CD8-positive, alpha-beta T cell (primary cell): ENCODE measurements at regions of chr10 and their contacts with region 1.

Region 1: DNA sequence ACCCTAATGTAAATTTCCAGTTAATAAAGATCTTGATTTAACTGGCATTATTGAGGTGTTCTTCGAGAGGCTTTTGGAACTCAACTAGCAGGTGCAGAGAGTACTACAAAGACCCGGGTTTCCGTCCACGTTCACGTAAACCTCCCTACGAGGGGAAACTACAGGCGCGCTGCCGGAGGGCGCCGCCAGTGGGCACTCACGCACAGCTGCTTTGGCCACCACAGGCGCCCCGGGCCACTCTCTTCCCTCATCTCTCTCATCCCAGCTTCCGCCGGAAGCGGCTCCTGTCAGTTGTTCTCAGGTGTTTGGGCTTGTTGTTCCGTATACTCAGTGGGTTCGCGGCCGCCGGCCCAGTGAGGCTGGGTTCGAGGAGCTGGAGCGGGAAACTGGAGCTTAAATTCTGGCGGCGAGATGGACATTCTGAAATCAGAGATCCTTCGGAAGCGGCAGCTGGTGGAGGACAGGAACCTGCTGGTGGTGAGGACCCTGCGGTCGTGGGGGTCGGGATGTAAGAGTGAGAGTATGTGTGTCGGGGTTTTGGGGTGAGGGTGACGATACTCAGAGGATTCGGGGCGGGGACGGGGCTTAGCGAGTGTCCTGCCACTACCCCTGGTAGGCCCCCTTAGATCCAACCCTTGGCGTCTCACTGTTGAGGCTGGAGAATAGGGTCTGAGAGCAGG is at the start of gene PRPF18:
- DNase-seq: peak; percentile 92 to 97 (median 95)
- ATAC-seq: peak; percentile 99
- H3K4me3 ChIP-seq: peak within 1 kb of the TSS; percentile 97
- H3K4me3 Mint-ChIP-seq: peak within 1 kb of the TSS; percentile 100
- H3K27ac ChIP-seq: peak within 1 kb of the TSS; percentile 69 to 73
- H3K27ac Mint-ChIP-seq: peak within 1 kb of the TSS; percentile 99
- H3K4me1 ChIP-seq: peaks cover 16% of the 10 kb centered on the region
- H3K4me1 Mint-ChIP-seq: peaks cover 41% of the 10 kb centered on the region
- H3K27me3 ChIP-seq: peaks cover 3 to 4% of the 10 kb centered on the region in 2 experiments
- H3K27me3 Mint-ChIP-seq: peaks cover 18% of the 10 kb centered on the region
- CTCF ChIP-seq: peak; percentile 96
- total RNA-seq, gene PRPF18: 29.4 to 29.6 TPM

Region 2: GRCh38 chr10:13099666-13100348 is 487.0 kb before region 1 on chr10 and contains the start of gene OPTN:
- CTCF ChIA-PET with region 1: no interaction called
- POLR2A ChIA-PET with region 1: no interaction called
- intact Hi-C with region 1: loop called (anchors 2 to 5 kb)
- DNase-seq: peak; percentile 62 to 93 (median 79)
- ATAC-seq: peak; percentile 75
- H3K4me3 ChIP-seq: peak within 1 kb of the TSS; percentile 62 to 89
- H3K4me3 Mint-ChIP-seq: peak within 1 kb of the TSS; percentile 92
- H3K27ac ChIP-seq: peak within 1 kb of the TSS; percentile 69 to 94
- H3K27ac Mint-ChIP-seq: peak within 1 kb of the TSS; percentile 98
- H3K4me1 ChIP-seq: peaks cover 6% of the 10 kb centered on the region
- H3K4me1 Mint-ChIP-seq: peaks cover 46% of the 10 kb centered on the region
- H3K27me3 ChIP-seq: no peaks in the 10 kb centered on the region
- H3K27me3 Mint-ChIP-seq: no peaks in the 10 kb centered on the region
- CTCF ChIP-seq: peak; percentile 57
- total RNA-seq, gene OPTN: 66.3 to 71.6 TPM

Region 3: GRCh38 chr10:13299437-13300287 is 287.2 kb before region 1 on chr10 and contains the start of gene PHYH:
- CTCF ChIA-PET with region 1: no interaction called
- POLR2A ChIA-PET with region 1: interaction called, 3 read pairs
- intact Hi-C with region 1: loop called in 1 of 2 experiments (anchors 10 kb)
- DNase-seq: peak; percentile 65 to 93 (median 80)
- ATAC-seq: peak; percentile 52
- H3K4me3 ChIP-seq: peak within 1 kb of the TSS; percentile 68 to 70
- H3K4me3 Mint-ChIP-seq: peak within 1 kb of the TSS; percentile 84
- H3K27ac ChIP-seq: peak within 1 kb of the TSS; percentile 81 to 91
- H3K27ac Mint-ChIP-seq: peak within 1 kb of the TSS; percentile 94
- H3K4me1 ChIP-seq: peaks cover 28% of the 10 kb centered on the region
- H3K4me1 Mint-ChIP-seq: peaks cover 26% of the 10 kb centered on the region
- H3K27me3 ChIP-seq: no peaks in the 10 kb centered on the region
- H3K27me3 Mint-ChIP-seq: no peaks in the 10 kb centered on the region
- CTCF ChIP-seq: no peak
- total RNA-seq, gene PHYH: 12.6 TPM

Region 4: GRCh38 chr10:13371897-13372470 is 214.8 kb before region 1 on chr10:
- CTCF ChIA-PET with region 1: interaction called, 3 read pairs
- POLR2A ChIA-PET with region 1: no interaction called
- intact Hi-C with region 1: loop called (anchors 1 kb)
- DNase-seq: peak; percentile 6 to 85 (median 65)
- ATAC-seq: peak; percentile 100
- H3K4me3 ChIP-seq: no peak overlapping the region
- H3K4me3 Mint-ChIP-seq: no peak overlapping the region
- H3K27ac ChIP-seq: no peak overlapping the region
- H3K27ac Mint-ChIP-seq: no peak overlapping the region
- H3K4me1 ChIP-seq: no peaks in the 10 kb centered on the region
- H3K4me1 Mint-ChIP-seq: peaks cover 4% of the 10 kb centered on the region
- H3K27me3 ChIP-seq: no peaks in the 10 kb centered on the region
- H3K27me3 Mint-ChIP-seq: peaks cover 7% of the 10 kb centered on the region
- CTCF ChIP-seq: peak; percentile 93

Region 5: DNA sequence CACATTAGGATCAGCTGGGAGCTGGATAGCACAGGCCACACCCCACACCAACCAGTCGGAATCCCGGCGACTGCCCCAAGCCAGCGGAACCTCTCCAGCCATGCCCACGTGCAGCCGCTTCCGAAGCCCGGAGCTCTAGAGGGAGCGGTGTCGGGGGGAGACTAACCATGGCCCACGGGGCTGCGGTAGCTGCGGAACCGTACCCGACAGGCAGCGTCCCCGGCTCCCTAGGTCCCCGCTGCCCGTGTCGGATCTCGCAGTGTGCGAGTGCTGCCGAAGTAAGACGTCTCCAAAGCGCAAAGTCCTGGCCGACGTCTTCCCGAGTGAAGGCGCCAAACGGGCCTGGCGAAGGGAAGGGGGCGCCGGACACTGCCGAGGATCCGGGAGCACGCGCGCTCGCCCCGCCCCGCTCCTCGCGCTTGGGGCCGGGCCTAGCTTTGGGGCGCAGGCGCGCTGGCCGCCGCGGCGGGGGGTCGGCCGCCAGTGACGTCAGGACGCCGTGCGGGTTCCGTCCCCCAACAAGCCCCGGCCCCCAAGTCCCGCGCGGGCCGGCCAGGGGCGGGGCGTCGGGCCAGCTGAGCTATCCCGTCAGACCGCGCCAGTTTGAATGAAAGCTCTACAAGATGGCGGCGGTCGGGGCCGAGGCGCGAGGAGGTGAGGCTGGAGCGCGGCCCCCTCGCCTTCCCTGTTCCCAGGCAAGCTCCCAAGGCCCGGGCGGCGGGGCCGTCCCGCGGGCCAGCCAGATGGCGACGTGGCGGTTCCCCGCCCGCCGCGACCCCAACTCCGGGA is 1291.6 kb after region 1 on chr10 and contains the start of gene SUV39H2:
- CTCF ChIA-PET with region 1: no interaction called
- POLR2A ChIA-PET with region 1: interaction called, 4 read pairs
- intact Hi-C with region 1: loop called in 1 of 2 experiments (anchors 10 kb)
- DNase-seq: peak; percentile 78 to 96 (median 92)
- ATAC-seq: peak; percentile 80
- H3K4me3 ChIP-seq: peak within 1 kb of the TSS; percentile 92 to 94
- H3K4me3 Mint-ChIP-seq: peak within 1 kb of the TSS; percentile 96
- H3K27ac ChIP-seq: peak within 1 kb of the TSS; percentile 67 to 69
- H3K27ac Mint-ChIP-seq: peak within 1 kb of the TSS; percentile 79
- H3K4me1 ChIP-seq: peaks cover 26% of the 10 kb centered on the region
- H3K4me1 Mint-ChIP-seq: peaks cover 31% of the 10 kb centered on the region
- H3K27me3 ChIP-seq: no peaks in the 10 kb centered on the region
- H3K27me3 Mint-ChIP-seq: no peaks in the 10 kb centered on the region
- CTCF ChIP-seq: no peak
- total RNA-seq, gene SUV39H2: 2.6 to 3.1 TPM

Region 6: GRCh38 chr10:15097011-15097812 is 1510.4 kb after region 1 on chr10 and contains the start of gene RPP38:
- CTCF ChIA-PET with region 1: no interaction called
- POLR2A ChIA-PET with region 1: no interaction called
- intact Hi-C with region 1: loop called in 1 of 2 experiments (anchors 5 kb)
- DNase-seq: peak; percentile 85 to 98 (median 95)
- ATAC-seq: peak; percentile 83
- H3K4me3 ChIP-seq: peak within 1 kb of the TSS; percentile 74 to 88
- H3K4me3 Mint-ChIP-seq: peak within 1 kb of the TSS; percentile 97
- H3K27ac ChIP-seq: peak within 1 kb of the TSS; percentile 92 to 96
- H3K27ac Mint-ChIP-seq: peak within 1 kb of the TSS; percentile 97
- H3K4me1 ChIP-seq: peaks cover 28% of the 10 kb centered on the region
- H3K4me1 Mint-ChIP-seq: peaks cover 35% of the 10 kb centered on the region
- H3K27me3 ChIP-seq: no peaks in the 10 kb centered on the region
- H3K27me3 Mint-ChIP-seq: no peaks in the 10 kb centered on the region
- CTCF ChIP-seq: no peak
- total RNA-seq, gene RPP38: 10.6 to 12.3 TPM